K562 (cell line): ENCODE measurements at regions of chr11 and their contacts with region 1.

Region 1: DNA sequence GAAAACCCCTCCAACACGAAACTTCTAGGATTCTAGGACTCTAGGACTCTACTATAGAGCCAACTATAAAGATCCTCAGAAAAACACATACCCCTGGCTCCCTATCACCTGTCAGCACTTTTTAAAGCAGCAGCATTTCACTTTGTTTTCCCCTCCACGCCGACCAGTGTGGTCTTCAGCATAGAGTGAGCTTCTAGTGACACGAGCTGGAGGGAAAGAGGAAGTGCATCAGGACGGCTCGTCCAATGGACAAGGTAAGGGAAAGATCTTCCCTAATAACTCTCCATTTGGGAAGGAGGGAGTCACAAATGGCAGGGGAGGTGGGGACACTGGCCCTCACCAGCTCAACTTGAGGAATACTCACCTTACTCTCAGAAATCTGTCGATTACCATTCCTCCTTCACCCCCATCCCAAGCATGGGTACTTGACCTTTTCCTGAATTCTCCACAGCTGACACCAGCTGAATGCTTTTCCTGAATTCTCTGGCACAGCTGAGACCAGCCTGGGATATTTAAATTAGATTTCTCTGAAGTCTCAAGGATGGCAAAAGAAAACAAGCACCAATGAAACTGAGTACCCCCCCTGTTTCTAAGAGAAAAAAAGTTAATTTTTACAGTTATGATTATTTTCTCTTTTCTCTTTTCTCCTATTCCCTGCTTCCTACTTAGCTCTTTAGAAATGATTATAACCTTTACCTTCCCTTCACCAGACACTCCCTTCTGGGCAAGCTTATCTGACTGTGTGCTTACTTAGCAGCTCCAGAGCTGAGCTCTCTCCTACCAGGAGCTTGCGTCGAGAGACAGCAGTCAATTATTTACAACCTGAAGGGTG is 33.3 kb upstream of the NNMT start:
- DNase-seq: peak; percentile 54 to 68 (median 58)
- ATAC-seq: peak; percentile 83
- H3K4me3 ChIP-seq: no peak overlapping the region
- H3K27ac ChIP-seq: no peak overlapping the region
- H3K4me1 ChIP-seq: peaks cover 12 to 16% of the 10 kb centered on the region in 2 experiments; a peak in 4 of 5 replicates
- H3K27me3 ChIP-seq: peaks cover 0 to 3% of the 10 kb centered on the region in 2 experiments; a peak in 3 of 5 replicates
- CTCF ChIP-seq: peak; percentile 75 to 85 (median 84)
- EP300 ChIP-seq: no peak
- POLR2A ChIP-seq: no peak
- RAD21 ChIP-seq: peak; percentile 89 to 92

Region 2: DNA sequence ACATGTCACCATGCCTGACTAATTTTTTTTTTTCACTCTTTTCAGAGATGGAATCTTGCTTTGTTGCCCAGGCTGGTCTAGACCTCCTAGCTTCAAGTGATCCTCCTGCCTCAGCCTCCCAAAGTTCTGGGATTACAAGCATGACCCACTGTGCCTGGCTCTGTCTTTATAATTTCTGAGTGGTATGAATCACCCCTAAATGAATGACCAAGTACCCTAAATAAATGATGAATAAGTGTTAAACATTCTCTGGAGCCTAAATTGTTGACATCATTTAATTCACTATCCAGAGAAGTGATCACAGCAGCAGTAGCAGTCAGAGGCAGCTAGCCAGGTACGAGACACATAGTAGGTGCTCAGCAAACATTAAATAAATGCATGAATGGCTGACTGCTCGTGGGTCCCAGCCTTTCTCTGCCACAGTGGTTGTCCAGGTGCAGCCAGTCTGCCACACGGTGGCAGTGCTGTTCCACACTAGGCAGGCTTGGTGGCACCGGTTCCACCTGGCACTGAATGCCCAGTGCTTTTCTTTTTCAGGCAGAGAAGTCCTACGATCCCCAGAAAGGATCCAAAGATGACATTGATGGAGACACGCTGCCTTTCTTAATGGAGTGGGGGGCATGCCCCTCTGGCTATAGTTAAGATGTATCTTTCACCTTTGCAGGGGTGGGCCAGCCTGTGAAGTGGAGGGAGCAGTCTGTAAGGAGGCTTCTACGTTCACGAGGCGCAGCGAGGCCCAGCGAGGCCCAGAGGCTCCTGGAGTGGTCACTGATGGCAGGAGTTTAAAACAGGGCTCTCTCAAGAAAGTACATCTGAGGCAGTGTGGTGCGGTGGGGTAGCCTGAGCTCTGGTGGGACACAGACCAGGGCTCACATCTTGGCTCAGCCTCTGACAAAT is 957.2 kb before region 1 on chr11:
- CTCF ChIA-PET with region 1: no interaction called
- POLR2A ChIA-PET with region 1: no interaction called
- in situ Hi-C with region 1: loop called (anchors 25 kb)
- intact Hi-C with region 1: loop called (anchors 5 kb)
- DNase-seq: peak; percentile 38 to 58 (median 45)
- ATAC-seq: peak; percentile 90
- H3K4me3 ChIP-seq: no peak overlapping the region
- H3K27ac ChIP-seq: no peak overlapping the region
- H3K4me1 ChIP-seq: no peaks in the 10 kb centered on the region
- H3K27me3 ChIP-seq: peaks cover 5 to 16% of the 10 kb centered on the region in 2 experiments; a peak in 4 of 5 replicates
- CTCF ChIP-seq: peak; percentile 83 to 90 (median 89)
- EP300 ChIP-seq: no peak
- POLR2A ChIP-seq: no peak
- RAD21 ChIP-seq: peak; percentile 94

Region 3: GRCh38 chr11:113593698-113594308 is 669.1 kb before region 1 on chr11:
- CTCF ChIA-PET with region 1: no interaction called
- POLR2A ChIA-PET with region 1: no interaction called
- in situ Hi-C with region 1: no loop called
- intact Hi-C with region 1: loop called (anchors 10 kb)
- DNase-seq: peak; percentile 16 to 73 (median 45)
- ATAC-seq: peak; percentile 95
- H3K4me3 ChIP-seq: no peak overlapping the region
- H3K27ac ChIP-seq: no peak overlapping the region
- H3K4me1 ChIP-seq: peaks cover 2 to 9% of the 10 kb centered on the region in 2 experiments
- H3K27me3 ChIP-seq: no peaks in the 10 kb centered on the region
- CTCF ChIP-seq: no peak
- EP300 ChIP-seq: peak; percentile 74
- POLR2A ChIP-seq: no peak
- RAD21 ChIP-seq: 0 out of 4 replicates have a peak, but pooled peaks of 1 of the 2 experiments have one; percentile 5

Region 4: GRCh38 chr11:113896156-113896879 is 366.6 kb before region 1 on chr11:
- CTCF ChIA-PET with region 1: interaction called, 5 read pairs
- POLR2A ChIA-PET with region 1: interaction called, 3 read pairs
- in situ Hi-C with region 1: loop called (anchors 5 kb)
- intact Hi-C with region 1: loop called (anchors 1 kb)
- DNase-seq: peak; percentile 45 to 57 (median 48)
- ATAC-seq: peak; percentile 94
- H3K4me3 ChIP-seq: no peak overlapping the region
- H3K27ac ChIP-seq: no peak overlapping the region
- H3K4me1 ChIP-seq: peaks cover 0 to 4% of the 10 kb centered on the region in 2 experiments; a peak in 1 of 5 replicates
- H3K27me3 ChIP-seq: 0 out of 5 replicates have a peak, but pooled peaks cover 2 to 4% of the 10 kb centered on the region in 2 experiments
- CTCF ChIP-seq: peak; percentile 70 to 81 (median 81)
- EP300 ChIP-seq: no peak
- POLR2A ChIP-seq: no peak
- RAD21 ChIP-seq: peak; percentile 38 to 70

Region 5: DNA sequence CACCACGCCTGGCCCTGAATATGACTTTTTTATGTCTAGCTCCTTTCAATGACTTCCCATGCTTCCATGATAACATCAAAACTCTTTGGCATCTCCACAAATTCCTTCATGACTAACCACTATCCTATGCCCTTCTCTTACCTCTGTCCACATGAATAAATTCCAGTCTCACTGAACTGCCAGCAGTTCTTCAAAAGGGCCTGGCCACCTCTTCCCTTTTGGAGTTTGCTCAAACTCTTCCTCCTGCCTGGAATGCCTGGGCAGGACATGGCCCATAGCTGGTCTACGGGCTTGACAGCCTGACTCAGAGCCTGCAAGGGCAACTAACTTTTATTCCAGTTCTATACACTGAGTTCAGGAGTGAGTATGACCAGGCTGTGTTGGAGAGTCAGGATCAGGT is 245.2 kb before region 1 on chr11:
- CTCF ChIA-PET with region 1: no interaction called
- POLR2A ChIA-PET with region 1: interaction called, 4 read pairs
- in situ Hi-C with region 1: loop called (anchors 10 kb)
- intact Hi-C with region 1: no loop called
- DNase-seq: no peak
- ATAC-seq: no peak
- H3K4me3 ChIP-seq: no peak overlapping the region
- H3K27ac ChIP-seq: no peak overlapping the region
- H3K4me1 ChIP-seq: no peaks in the 10 kb centered on the region
- H3K27me3 ChIP-seq: peaks cover 6 to 26% of the 10 kb centered on the region in 2 experiments; a peak in 3 of 5 replicates
- CTCF ChIP-seq: no peak
- EP300 ChIP-seq: no peak
- POLR2A ChIP-seq: no peak
- RAD21 ChIP-seq: no peak

Region 6: DNA sequence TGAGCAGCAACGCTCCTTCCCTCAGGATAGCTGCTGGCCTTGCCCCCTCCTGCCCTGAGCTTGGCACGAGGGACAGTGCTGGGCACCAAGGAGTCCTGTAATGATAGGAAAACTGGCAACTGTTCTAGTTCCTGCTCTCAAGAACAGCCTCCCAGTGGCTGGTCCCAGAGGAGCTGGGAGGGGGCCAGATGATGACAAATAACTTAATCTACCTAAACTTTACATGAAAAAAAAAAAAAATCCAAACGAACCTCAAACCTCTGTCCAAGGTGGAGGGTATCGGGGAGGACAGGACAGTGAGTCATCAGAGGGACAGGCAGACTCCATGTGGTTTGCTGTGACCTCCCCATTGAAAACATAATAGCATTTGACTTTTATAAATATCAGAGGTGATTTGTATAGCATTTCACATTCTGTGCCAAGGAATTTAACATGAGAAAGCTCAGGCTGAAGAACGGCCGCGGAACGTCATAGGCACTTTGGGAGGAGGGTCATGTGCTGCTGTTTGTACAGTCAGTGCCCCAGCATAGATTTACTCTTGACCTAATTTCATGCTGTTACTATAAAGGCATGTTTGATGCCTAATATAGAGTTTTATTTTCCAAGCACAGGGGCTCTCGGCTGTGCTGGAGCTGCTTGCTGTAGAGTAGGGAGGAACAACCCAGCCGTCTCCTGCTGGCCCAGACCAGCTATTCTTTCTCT is 64.9 kb before region 1 on chr11:
- CTCF ChIA-PET with region 1: interaction called, 3 read pairs
- POLR2A ChIA-PET with region 1: interaction called, 3 read pairs
- in situ Hi-C with region 1: no loop called
- intact Hi-C with region 1: loop called (anchors 1 kb)
- DNase-seq: no peak
- ATAC-seq: no peak
- H3K4me3 ChIP-seq: no peak overlapping the region
- H3K27ac ChIP-seq: no peak overlapping the region
- H3K4me1 ChIP-seq: peaks cover 7% of the 10 kb centered on the region in 2 experiments; a peak in 3 of 5 replicates
- H3K27me3 ChIP-seq: no peaks in the 10 kb centered on the region
- CTCF ChIP-seq: no peak
- EP300 ChIP-seq: no peak
- POLR2A ChIP-seq: no peak
- RAD21 ChIP-seq: no peak